ENCODE measurements at regions of chr1 and their contacts with region 1.

Region 1: DNA sequence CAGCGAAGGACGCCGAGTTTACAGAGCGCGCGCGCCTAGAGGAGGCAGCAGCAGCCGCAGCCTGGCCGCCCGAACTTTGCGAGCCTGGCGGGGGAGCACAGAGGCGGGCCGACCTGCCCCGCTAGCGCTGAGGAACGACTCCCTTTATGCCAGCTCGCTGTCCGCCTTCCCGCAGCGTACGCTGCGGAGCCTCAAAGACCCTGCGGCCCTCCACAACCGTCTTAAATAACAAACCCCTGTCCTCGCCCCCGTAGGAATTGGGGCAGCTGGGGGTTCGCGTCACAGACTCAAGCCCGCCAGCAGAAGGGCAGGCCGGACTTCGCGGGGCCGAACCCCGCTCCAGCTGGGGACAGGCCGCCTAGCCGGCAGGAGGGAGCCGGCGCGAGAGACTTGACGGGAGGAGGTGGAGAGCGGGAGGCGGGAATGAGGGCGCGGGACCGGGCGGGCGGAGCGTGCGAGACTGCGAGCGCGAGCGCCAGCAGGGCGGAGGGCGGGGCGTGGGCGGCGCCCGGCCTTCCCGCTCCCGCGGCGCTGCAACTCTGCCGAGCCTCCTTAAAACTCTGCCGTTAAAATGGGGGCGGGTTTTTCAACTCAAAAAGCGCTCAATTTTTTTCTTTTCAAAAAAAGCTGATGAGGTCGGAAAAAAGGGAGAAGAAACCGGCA is 1.8 kb upstream of the CDKN2C start:
- DNase-seq: peak; percentile 80
- ATAC-seq: peak; percentile 80
- H3K4me3 Mint-ChIP-seq: peak overlapping the region; percentile 98
- H3K27ac Mint-ChIP-seq: peak overlapping the region; percentile 87
- H3K4me1 Mint-ChIP-seq: peaks cover 18% of the 10 kb centered on the region
- H3K27me3 Mint-ChIP-seq: no peaks in the 10 kb centered on the region
- CTCF ChIP-seq: no peak

Region 2: DNA sequence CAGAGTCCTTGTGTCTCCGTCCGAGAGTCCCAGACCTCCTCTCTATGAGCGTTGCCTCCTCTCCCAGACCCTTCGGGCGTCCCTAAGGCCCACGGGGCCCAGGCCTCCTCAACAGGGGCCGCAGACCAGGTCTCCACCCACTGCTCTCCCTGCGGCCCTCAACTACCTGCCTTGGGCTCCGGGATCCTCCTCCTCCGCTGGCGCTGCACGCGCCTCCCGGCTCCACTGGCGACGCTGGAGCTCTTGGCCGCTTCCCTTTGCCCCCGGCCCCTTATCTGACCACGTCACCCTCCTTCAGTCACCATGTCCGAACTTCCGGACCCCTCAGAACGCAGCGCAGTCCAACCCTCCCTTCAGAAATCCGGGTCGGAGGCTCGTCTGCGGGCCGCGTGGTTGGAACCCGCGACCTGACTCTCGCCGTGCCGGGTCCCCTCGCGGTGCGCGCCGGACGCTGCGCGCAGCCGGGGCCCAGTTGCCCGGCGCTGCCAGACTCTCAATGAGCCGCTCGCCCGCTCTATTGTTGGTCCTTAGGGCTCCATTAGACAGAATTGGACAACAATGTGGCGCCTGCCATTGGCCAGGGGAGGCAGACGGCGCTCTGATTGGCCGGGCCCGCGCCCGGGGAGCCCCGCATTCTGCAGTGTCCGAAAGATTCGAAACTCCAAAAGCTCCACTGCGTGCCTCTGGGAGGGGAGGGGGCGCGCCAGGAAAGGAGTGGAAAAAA is 545.2 kb before region 1 on chr1 and contains the start of gene DMRTA2:
- CTCF ChIA-PET with region 1: no interaction called
- POLR2A ChIA-PET with region 1: no interaction called
- intact Hi-C with region 1: loop called (anchors 10 kb)
- DNase-seq: no peak
- ATAC-seq: no peak
- H3K4me3 Mint-ChIP-seq: peak within 1 kb of the TSS; percentile 86
- H3K27ac Mint-ChIP-seq: peak within 1 kb of the TSS; percentile 54
- H3K4me1 Mint-ChIP-seq: peaks cover 55% of the 10 kb centered on the region
- H3K27me3 Mint-ChIP-seq: peaks cover 71% of the 10 kb centered on the region
- CTCF ChIP-seq: no peak
- total RNA-seq, gene DMRTA2: not detected in 2 replicates

Region 3: GRCh38 chr1:50735443-50735842 is 232.8 kb before region 1 on chr1:
- CTCF ChIA-PET with region 1: no interaction called
- POLR2A ChIA-PET with region 1: no interaction called
- intact Hi-C with region 1: no loop called
- DNase-seq: no peak
- ATAC-seq: no peak
- H3K4me3 Mint-ChIP-seq: no peak overlapping the region
- H3K27ac Mint-ChIP-seq: no peak overlapping the region
- H3K4me1 Mint-ChIP-seq: peaks cover 14% of the 10 kb centered on the region
- H3K27me3 Mint-ChIP-seq: no peaks in the 10 kb centered on the region
- CTCF ChIP-seq: no peak

Region 4: DNA sequence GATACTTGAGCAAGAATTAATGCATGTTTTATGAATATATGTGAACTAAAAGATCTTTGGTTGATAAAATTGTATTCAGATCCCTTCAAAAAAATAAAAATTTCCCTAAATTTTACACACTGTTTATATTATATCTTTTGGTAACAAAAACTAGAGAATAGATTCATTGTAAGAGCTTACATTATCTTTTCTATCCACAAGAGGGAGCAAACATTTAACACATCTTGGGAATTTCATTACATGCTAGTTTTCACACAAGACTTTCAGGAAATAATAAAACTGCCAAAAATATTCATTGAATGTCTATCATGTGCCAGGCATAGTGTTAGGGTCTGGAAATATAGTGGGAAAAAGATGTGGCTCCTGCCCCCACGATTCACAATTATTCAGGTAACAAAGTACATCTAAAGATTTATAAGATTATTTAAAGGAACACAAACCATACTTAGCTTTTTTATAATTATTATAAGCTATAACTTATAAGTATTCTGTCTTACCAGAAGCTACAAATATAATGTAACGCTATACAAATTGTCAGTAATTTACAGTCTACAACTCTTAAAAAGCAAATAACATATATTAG is 38.8 kb before region 1 on chr1:
- CTCF ChIA-PET with region 1: interaction called, 15 read pairs
- POLR2A ChIA-PET with region 1: interaction called, 10 read pairs
- intact Hi-C with region 1: loop called (anchors 2 kb)
- DNase-seq: no peak
- ATAC-seq: no peak
- H3K4me3 Mint-ChIP-seq: no peak overlapping the region
- H3K27ac Mint-ChIP-seq: no peak overlapping the region
- H3K4me1 Mint-ChIP-seq: peaks cover 34% of the 10 kb centered on the region
- H3K27me3 Mint-ChIP-seq: no peaks in the 10 kb centered on the region
- CTCF ChIP-seq: no peak

Region 5: GRCh38 chr1:50978144-50978851 is 10.0 kb after region 1 on chr1:
- CTCF ChIA-PET with region 1: interaction called, 5 read pairs
- POLR2A ChIA-PET with region 1: interaction called, 35 read pairs
- intact Hi-C with region 1: loop called (anchors 1 kb)
- DNase-seq: peak; percentile 52
- ATAC-seq: peak; percentile 29
- H3K4me3 Mint-ChIP-seq: peak overlapping the region; percentile 80
- H3K27ac Mint-ChIP-seq: peak overlapping the region; percentile 68
- H3K4me1 Mint-ChIP-seq: peaks cover 22% of the 10 kb centered on the region
- H3K27me3 Mint-ChIP-seq: peaks cover 18% of the 10 kb centered on the region
- CTCF ChIP-seq: no peak

Region 6: DNA sequence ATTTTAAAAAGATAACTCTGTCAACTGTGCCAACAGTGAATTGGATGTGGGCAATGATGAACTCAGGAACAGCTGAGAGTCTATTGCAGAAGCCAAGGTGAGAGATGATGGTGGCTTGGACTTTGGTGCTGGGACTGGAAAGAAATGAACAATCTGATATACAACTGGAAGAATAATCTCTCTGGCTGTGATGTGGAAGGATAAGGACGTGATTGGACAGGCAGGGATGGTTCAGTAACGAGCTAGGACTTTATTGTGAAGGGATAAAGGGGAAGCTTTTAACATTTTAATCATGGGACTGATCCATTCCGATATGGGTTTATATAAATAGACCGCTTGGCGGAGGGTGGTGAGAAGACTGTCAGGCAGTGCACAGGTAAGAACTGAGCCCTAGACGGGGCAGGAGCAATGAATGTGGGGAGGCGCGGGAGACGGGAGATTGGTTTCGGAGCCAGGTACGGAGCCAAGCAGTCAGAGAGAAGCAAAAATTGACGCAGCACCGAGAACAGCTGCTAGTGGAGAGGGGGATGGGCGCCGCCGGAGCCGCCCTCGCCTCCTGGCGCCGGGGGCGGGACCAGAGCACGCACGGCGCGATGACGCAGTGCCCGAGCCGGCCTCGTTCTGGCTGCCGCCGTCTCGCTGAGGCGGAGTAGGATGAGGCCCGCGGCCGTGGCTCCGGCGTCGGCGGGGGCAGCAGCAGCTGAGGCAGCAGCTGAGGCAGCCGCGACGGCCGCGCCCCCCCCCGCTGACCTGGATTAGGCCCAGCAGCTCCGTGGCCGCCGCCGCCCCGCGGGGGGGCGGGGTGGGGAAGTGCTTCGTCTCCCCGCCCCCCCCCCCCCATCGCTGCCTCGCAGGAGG is 267.6 kb after region 1 on chr1 and contains the start of gene RNF11:
- CTCF ChIA-PET with region 1: no interaction called
- POLR2A ChIA-PET with region 1: no interaction called
- intact Hi-C with region 1: loop called (anchors 2 kb)
- DNase-seq: peak; percentile 94
- ATAC-seq: peak; percentile 74
- H3K4me3 Mint-ChIP-seq: peak within 1 kb of the TSS; percentile 92
- H3K27ac Mint-ChIP-seq: peak within 1 kb of the TSS; percentile 93
- H3K4me1 Mint-ChIP-seq: peaks cover 24% of the 10 kb centered on the region
- H3K27me3 Mint-ChIP-seq: peaks cover 4% of the 10 kb centered on the region
- CTCF ChIP-seq: no peak
- total RNA-seq, gene RNF11: 15.3 and 17.1 TPM in 2 replicates

Measured in activated B cell treated with CpG ODN at 0.5 μM for 24 hours (primary cell).